ENCODE measurements at regions of chr6 and their contacts with region 1.

Region 1: GRCh38 chr6:83884523-83884922 is 25.0 kb downstream of the CYB5R4 start:
- DNase-seq: no peak
- H3K4me3 ChIP-seq: no peak overlapping the region
- H3K27ac ChIP-seq: no peak overlapping the region
- H3K4me1 ChIP-seq: peaks cover 4% of the 10 kb centered on the region
- H3K27me3 ChIP-seq: no peaks in the 10 kb centered on the region
- CTCF ChIP-seq: peak; percentile 79

Region 2: DNA sequence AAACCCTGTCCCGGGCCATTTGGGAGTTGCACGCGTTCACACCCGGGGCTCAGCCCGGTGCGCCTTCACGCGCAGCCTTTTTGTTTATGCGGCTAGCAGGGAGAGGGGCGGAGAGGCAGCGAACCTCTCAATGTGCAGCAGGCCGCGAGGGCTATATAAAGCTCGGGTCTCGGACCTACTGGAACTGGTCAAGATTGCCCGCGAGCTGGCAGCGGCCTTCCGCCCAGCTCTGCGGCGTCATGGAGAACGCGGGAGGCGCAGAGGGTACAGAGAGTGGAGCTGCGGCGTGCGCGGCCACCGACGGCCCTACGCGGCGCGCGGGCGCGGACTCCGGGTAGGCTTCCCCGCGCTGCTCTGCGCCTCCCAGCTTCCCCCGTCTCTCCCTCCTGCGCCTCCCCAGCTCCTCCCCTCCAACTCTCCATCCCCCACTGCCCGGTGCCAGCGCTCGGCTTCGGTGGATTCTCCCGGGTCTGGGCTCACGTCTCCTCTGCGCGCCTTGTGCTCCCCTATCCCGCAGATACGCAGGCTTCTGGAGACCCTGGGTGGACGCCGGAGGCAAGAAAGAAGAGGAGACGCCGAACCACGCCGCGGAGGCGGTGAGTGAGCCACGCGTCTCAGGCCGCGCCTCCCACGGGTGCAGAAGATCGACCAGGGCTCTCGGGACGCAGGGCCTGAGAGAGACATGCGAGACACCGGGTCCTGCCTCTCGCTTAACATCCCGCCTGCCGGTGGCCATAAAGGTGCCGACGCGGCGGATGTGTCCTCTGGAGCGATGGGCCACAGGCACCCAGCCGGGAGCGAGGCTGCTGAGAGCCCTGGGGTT is 31.1 kb before region 1 on chr6 and contains the start of gene RIPPLY2:
- intact Hi-C with region 1: no loop called
- DNase-seq: peak; percentile 15
- H3K4me3 ChIP-seq: peak within 1 kb of the TSS; percentile 64
- H3K27ac ChIP-seq: no peak within 1 kb of the TSS
- H3K4me1 ChIP-seq: peaks cover 16% of the 10 kb centered on the region
- H3K27me3 ChIP-seq: peaks cover 74% of the 10 kb centered on the region
- CTCF ChIP-seq: no peak
- total RNA-seq, gene RIPPLY2: not detected

Region 3: GRCh38 chr6:84220809-84221409 is 336.4 kb after region 1 on chr6:
- intact Hi-C with region 1: loop called (anchors 2 kb)
- DNase-seq: no peak
- H3K4me3 ChIP-seq: no peak overlapping the region
- H3K27ac ChIP-seq: no peak overlapping the region
- H3K4me1 ChIP-seq: peaks cover 2% of the 10 kb centered on the region
- H3K27me3 ChIP-seq: no peaks in the 10 kb centered on the region
- CTCF ChIP-seq: peak; percentile 66

Region 4: GRCh38 chr6:84606860-84607259 is 722.3 kb after region 1 on chr6:
- intact Hi-C with region 1: no loop called
- DNase-seq: no peak
- H3K4me3 ChIP-seq: no peak overlapping the region
- H3K27ac ChIP-seq: no peak overlapping the region
- H3K4me1 ChIP-seq: no peaks in the 10 kb centered on the region
- H3K27me3 ChIP-seq: no peaks in the 10 kb centered on the region
- CTCF ChIP-seq: no peak